Activated CD8-positive, alpha-beta memory T cell treated with anti-CD3 and anti-CD28 coated beads, Interleukin-2, amount 10 ng/mL, durations not matched to agents 7 days and 5 days (primary cell): ENCODE measurements at regions of chr4 and their contacts with region 1.

Region 1: DNA sequence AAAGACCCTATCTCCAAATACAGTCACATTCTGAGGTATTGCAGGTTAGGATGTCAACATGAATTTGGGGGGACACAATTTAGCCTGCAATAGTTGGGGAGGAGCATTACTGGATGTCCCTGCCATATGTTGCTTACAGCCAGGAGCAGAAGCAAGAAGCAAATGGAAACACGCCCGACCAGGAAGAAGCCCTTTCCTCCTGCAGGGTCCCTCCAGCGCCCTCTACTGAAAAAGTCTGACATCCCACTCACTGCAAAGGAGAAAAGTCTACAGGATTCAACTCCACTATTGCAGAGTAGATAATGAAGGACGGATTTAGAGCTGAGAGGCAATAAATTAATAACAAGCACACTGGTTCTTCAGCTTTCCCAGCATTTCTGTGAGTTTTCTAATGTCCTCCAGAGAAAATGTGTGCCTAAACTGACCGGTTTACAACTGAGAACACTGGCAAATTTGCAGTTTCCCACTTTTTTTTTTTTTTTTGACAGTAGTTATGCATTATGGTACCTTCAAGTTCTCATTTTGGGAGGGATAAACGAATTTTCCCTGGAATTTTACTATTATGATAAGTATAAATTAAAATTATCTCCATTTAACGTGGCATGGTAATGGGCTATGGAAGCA is 31.7 kb downstream of the COQ2 start:
- DNase-seq: peak; percentile 85
- ATAC-seq: peak; percentile 89
- H3K4me3 Mint-ChIP-seq: no peak overlapping the region
- H3K27ac Mint-ChIP-seq: no peak overlapping the region
- H3K4me1 Mint-ChIP-seq: peaks cover 14% of the 10 kb centered on the region
- H3K27me3 Mint-ChIP-seq: peaks cover 5% of the 10 kb centered on the region

Region 2: GRCh38 chr4:82989575-82990429 is 263.1 kb before region 1 on chr4:
- CTCF ChIA-PET with region 1: no interaction called
- DNase-seq: peak; percentile 73
- ATAC-seq: peak; percentile 86
- H3K4me3 Mint-ChIP-seq: peak overlapping the region; percentile 20
- H3K27ac Mint-ChIP-seq: peak overlapping the region; percentile 79
- H3K4me1 Mint-ChIP-seq: peaks cover 31% of the 10 kb centered on the region
- H3K27me3 Mint-ChIP-seq: no peaks in the 10 kb centered on the region

Region 3: GRCh38 chr4:83054928-83055327 is 198.0 kb before region 1 on chr4:
- CTCF ChIA-PET with region 1: interaction called, 10 read pairs
- DNase-seq: no peak
- ATAC-seq: no peak
- H3K4me3 Mint-ChIP-seq: no peak overlapping the region
- H3K27ac Mint-ChIP-seq: no peak overlapping the region
- H3K4me1 Mint-ChIP-seq: peaks cover 2% of the 10 kb centered on the region
- H3K27me3 Mint-ChIP-seq: no peaks in the 10 kb centered on the region

Region 4: GRCh38 chr4:83074086-83074704 is 178.7 kb before region 1 on chr4:
- CTCF ChIA-PET with region 1: interaction called, 42 read pairs
- DNase-seq: peak; percentile 76
- ATAC-seq: peak; percentile 91
- H3K4me3 Mint-ChIP-seq: no peak overlapping the region
- H3K27ac Mint-ChIP-seq: peak overlapping the region; percentile 52
- H3K4me1 Mint-ChIP-seq: peaks cover 25% of the 10 kb centered on the region
- H3K27me3 Mint-ChIP-seq: no peaks in the 10 kb centered on the region

Region 5: GRCh38 chr4:83083925-83084475 is 168.9 kb before region 1 on chr4:
- CTCF ChIA-PET with region 1: interaction called, 11 read pairs
- DNase-seq: peak; percentile 87
- ATAC-seq: peak; percentile 98
- H3K4me3 Mint-ChIP-seq: no peak overlapping the region
- H3K27ac Mint-ChIP-seq: peak overlapping the region; percentile 84
- H3K4me1 Mint-ChIP-seq: peaks cover 26% of the 10 kb centered on the region
- H3K27me3 Mint-ChIP-seq: no peaks in the 10 kb centered on the region

Region 6: GRCh38 chr4:83217721-83218522 is 35.0 kb before region 1 on chr4:
- CTCF ChIA-PET with region 1: interaction called, 32 read pairs
- DNase-seq: peak; percentile 91
- ATAC-seq: peak; percentile 90
- H3K4me3 Mint-ChIP-seq: peak overlapping the region; percentile 41
- H3K27ac Mint-ChIP-seq: peak overlapping the region; percentile 85
- H3K4me1 Mint-ChIP-seq: peaks cover 61% of the 10 kb centered on the region
- H3K27me3 Mint-ChIP-seq: peaks cover 19% of the 10 kb centered on the region

Region 7: GRCh38 chr4:83237591-83237990 is 15.3 kb before region 1 on chr4:
- CTCF ChIA-PET with region 1: interaction called, 52 read pairs
- DNase-seq: no peak
- ATAC-seq: no peak
- H3K4me3 Mint-ChIP-seq: no peak overlapping the region
- H3K27ac Mint-ChIP-seq: no peak overlapping the region
- H3K4me1 Mint-ChIP-seq: peaks cover 34% of the 10 kb centered on the region
- H3K27me3 Mint-ChIP-seq: peaks cover 81% of the 10 kb centered on the region